HEK293 (cell line): ENCODE measurements at regions of chr2 and their contacts with region 1.

Region 1: DNA sequence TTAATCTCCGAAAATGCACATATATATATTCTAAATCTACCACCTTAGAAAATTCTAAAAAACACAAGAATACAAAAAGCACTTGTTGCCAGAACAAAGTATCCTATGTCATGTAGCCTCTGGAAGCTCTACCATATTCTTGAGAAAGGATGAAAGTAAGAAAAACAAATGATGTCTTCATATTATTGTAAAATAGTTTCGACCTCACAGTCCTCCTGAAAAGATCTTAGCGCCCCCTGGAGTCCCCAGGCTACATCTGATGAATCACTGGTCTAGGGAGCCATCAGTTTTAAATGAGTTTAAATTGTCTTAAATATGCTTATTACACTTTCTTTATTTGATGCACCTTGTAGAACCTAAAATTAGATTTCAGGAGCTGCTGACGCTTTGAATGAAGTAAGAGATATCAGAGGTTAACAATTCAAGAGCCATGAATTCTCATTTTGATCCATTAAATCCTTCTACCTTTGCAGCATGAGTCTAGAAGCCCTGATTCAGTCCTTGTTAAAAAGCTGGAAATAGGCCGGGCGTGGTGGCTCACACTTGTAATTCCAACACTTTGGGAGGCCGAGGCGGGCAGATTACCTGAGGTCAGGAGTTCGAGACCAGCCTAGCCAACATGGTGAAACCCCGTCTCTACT is 138.8 kb downstream of the MCFD2 start:
- H3K4me3 ChIP-seq: no peak overlapping the region
- H3K27ac ChIP-seq: no peak overlapping the region
- H3K4me1 ChIP-seq: no peaks in the 10 kb centered on the region
- CTCF ChIP-seq: no peak

Region 2: DNA sequence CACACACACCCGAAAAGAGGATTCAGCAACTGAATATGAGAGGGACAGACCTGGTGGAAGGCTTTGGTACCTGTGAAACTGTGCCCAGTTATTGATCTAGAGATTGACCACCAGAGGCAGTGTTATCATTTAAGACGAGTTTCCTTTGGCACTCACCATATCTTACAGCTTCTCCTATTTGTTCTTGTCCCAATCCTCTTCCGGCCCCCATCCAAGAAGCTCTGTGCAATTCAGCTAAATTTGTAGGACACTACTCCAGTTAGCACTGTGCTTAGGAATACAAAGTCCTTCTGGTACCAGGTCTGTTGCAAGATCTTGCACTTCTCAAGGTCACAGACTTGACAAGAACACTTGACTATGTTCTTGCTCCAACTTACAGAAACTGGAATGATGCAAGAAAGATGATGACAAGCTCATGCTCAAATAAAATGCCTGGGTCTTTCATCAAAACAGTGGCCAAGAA is 119.7 kb before region 1 on chr2:
- CTCF ChIA-PET with region 1: interaction called, 33 read pairs
- POLR2A ChIA-PET with region 1: no interaction called
- H3K4me3 ChIP-seq: no peak overlapping the region
- H3K27ac ChIP-seq: no peak overlapping the region
- H3K4me1 ChIP-seq: peaks cover 3% of the 10 kb centered on the region
- CTCF ChIP-seq: no peak

Region 3: DNA sequence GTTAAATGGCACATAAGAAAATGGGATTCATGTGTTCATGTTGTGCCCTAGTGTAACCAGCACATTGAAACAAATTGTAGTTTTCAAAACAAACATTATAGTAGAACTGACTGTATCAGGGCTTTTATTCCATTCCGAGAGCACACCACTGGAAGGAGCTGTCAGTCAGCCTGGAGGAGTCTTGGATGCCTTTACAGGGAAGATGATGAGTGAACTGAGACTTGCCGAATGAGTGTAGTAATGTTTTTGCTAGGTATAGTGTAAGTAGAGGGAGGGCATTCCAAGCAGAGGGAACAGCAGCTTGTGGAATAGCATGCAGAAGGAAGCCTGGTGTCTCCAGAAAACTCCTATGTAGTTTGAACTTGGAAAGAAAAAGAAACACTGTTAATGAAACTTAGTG is 44.7 kb before region 1 on chr2:
- CTCF ChIA-PET with region 1: interaction called, 10 read pairs
- POLR2A ChIA-PET with region 1: no interaction called
- H3K4me3 ChIP-seq: no peak overlapping the region
- H3K27ac ChIP-seq: no peak overlapping the region
- H3K4me1 ChIP-seq: peaks cover 7% of the 10 kb centered on the region
- CTCF ChIP-seq: no peak

Region 4: DNA sequence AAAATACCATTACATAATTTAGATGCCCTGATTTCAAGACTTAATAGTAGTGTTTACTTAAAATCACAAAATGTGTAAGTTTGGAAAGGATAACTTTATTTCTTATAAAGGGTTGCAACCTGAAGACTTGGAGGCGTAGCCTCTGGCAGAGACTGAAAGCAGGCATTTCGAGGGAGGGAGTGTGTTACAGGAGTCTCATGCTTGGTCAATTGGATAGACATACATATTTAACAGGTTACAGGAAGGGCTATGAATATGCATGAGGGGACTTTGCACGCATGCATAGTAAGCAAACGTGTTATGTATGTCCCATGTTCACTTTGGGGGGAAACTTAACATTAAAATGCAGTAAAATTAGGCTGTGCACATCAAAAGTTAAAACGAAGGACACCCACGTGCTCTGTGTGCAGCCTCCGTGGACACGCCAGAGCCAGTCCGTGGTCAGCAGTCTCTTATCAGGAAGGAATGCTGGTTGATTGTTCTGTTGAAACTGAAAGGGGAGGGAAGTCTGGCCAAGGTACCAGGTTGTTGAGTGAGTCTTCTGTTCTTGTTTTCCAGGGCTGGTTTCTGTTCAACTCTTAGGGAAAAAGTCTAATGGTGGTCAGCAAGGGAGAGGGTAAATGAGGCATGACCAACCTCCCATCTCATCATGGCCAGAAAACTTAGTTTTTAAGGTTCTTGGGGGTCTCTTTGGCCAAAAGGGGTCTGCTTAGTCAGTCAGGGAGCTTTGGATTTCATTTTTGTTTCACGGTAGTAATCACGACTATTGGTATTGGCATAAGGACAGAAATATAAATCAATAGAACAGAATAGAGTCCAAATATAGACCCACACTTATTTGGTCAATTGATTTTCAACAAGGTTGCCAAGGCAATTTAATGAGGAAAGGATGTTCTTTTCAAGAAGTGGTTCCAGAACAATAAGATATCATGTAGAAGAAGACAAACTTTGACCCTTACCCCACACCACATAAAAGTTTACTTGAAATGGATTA is 16.9 kb after region 1 on chr2:
- CTCF ChIA-PET with region 1: interaction called, 23 read pairs
- POLR2A ChIA-PET with region 1: no interaction called
- H3K4me3 ChIP-seq: no peak overlapping the region
- H3K27ac ChIP-seq: no peak overlapping the region
- H3K4me1 ChIP-seq: no peaks in the 10 kb centered on the region
- CTCF ChIP-seq: no peak

Region 5: GRCh38 chr2:46873375-46874032 is 96.7 kb after region 1 on chr2:
- CTCF ChIA-PET with region 1: interaction called, 11 read pairs
- POLR2A ChIA-PET with region 1: no interaction called
- H3K4me3 ChIP-seq: no peak overlapping the region
- H3K27ac ChIP-seq: no peak overlapping the region
- H3K4me1 ChIP-seq: peaks cover 10% of the 10 kb centered on the region
- CTCF ChIP-seq: no peak